ENCODE measurements at regions of chr15 and their contacts with region 1.

Region 1: GRCh38 chr15:75532413-75533147 is 46.5 kb downstream of the PTPN9 start:
- DNase-seq: peak; percentile 58 to 67
- H3K4me3 ChIP-seq: no peak overlapping the region
- H3K4me3 Mint-ChIP-seq: no peak overlapping the region
- H3K27ac Mint-ChIP-seq: no peak overlapping the region
- H3K4me1 ChIP-seq: peaks cover 23% of the 10 kb centered on the region
- H3K4me1 Mint-ChIP-seq: peaks cover 17% of the 10 kb centered on the region
- H3K27me3 ChIP-seq: no peaks in the 10 kb centered on the region
- H3K27me3 Mint-ChIP-seq: no peaks in the 10 kb centered on the region
- CTCF ChIP-seq: peak; percentile 48 to 68

Region 2: DNA sequence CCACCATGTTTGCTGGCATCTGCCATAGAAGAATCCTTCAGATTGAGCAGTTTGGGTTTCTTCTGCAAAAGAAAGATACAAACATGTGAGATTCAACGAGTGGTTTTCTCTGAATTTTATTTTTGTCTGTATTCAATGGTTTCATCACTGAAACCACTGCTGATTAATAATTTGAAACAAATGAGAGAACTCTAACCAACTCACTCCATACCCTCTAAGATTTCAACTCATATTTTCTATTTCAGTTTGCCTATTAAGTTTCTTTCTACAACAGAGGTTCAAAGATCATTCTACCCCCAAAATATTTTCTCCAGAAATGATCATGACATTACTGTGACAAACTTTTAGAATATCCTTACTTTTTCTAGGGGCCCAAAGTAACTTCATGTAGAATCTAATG is 125.5 kb before region 1 on chr15:
- CTCF ChIA-PET with region 1: no interaction called
- POLR2A ChIA-PET with region 1: no interaction called
- intact Hi-C with region 1: no loop called
- DNase-seq: no peak
- H3K4me3 ChIP-seq: no peak overlapping the region
- H3K4me3 Mint-ChIP-seq: no peak overlapping the region
- H3K27ac Mint-ChIP-seq: no peak overlapping the region
- H3K4me1 ChIP-seq: no peaks in the 10 kb centered on the region
- H3K4me1 Mint-ChIP-seq: no peaks in the 10 kb centered on the region
- H3K27me3 ChIP-seq: no peaks in the 10 kb centered on the region
- H3K27me3 Mint-ChIP-seq: no peaks in the 10 kb centered on the region
- CTCF ChIP-seq: no peak

Region 3: DNA sequence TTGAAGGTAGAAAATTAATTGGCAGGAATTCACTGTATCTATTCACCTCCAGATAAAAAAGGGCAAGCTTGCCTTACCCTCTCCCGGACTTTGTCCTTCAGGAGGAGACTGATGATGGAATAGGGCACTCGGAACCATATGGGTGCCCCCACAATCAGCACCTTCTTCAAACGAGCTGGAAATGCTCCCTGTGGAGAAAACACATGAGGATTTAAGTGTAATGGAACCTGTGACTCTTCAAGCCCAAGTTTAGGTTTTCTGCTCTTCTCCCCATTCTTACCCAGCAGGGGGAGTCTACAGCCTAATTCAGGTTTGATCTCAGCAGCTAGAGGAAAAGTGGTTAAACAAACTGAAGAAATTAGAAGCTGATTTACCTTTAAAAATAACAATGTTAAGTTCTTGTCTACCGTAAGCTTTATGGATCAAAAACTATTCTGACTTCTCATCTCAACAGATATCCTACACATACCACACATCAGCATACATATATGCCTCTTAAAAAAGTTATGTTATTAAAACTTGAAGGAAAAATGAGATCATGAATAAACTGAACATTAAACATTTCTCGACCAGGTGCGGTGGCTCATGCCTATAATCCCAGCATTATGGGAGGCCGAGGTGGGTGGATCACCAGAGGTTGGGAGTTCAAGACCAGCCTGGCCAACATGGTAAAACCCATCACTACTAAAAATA is 23.6 kb before region 1 on chr15:
- CTCF ChIA-PET with region 1: interaction called, 15 read pairs
- POLR2A ChIA-PET with region 1: no interaction called
- intact Hi-C with region 1: no loop called
- DNase-seq: peak in 1 of 2 experiments; percentile 50
- H3K4me3 ChIP-seq: no peak overlapping the region
- H3K4me3 Mint-ChIP-seq: no peak overlapping the region
- H3K27ac Mint-ChIP-seq: no peak overlapping the region
- H3K4me1 ChIP-seq: no peaks in the 10 kb centered on the region
- H3K4me1 Mint-ChIP-seq: no peaks in the 10 kb centered on the region
- H3K27me3 ChIP-seq: no peaks in the 10 kb centered on the region
- H3K27me3 Mint-ChIP-seq: no peaks in the 10 kb centered on the region
- CTCF ChIP-seq: peak; percentile 51 to 73

Region 4: GRCh38 chr15:75659928-75660645 is 127.5 kb after region 1 on chr15:
- CTCF ChIA-PET with region 1: no interaction called
- POLR2A ChIA-PET with region 1: no interaction called
- intact Hi-C with region 1: no loop called
- DNase-seq: no peak
- H3K4me3 ChIP-seq: no peak overlapping the region
- H3K4me3 Mint-ChIP-seq: no peak overlapping the region
- H3K27ac Mint-ChIP-seq: no peak overlapping the region
- H3K4me1 ChIP-seq: peaks cover 54% of the 10 kb centered on the region
- H3K4me1 Mint-ChIP-seq: peaks cover 52% of the 10 kb centered on the region
- H3K27me3 ChIP-seq: no peaks in the 10 kb centered on the region
- H3K27me3 Mint-ChIP-seq: no peaks in the 10 kb centered on the region
- CTCF ChIP-seq: no peak

Region 5: GRCh38 chr15:76084256-76084655 is 551.7 kb after region 1 on chr15:
- CTCF ChIA-PET with region 1: no interaction called
- POLR2A ChIA-PET with region 1: no interaction called
- intact Hi-C with region 1: no loop called
- DNase-seq: no peak
- H3K4me3 ChIP-seq: no peak overlapping the region
- H3K4me3 Mint-ChIP-seq: no peak overlapping the region
- H3K27ac Mint-ChIP-seq: no peak overlapping the region
- H3K4me1 ChIP-seq: no peaks in the 10 kb centered on the region
- H3K4me1 Mint-ChIP-seq: no peaks in the 10 kb centered on the region
- H3K27me3 ChIP-seq: no peaks in the 10 kb centered on the region
- H3K27me3 Mint-ChIP-seq: peaks cover 3% of the 10 kb centered on the region
- CTCF ChIP-seq: no peak

Region 6: GRCh38 chr15:76150971-76151598 is 618.5 kb after region 1 on chr15:
- CTCF ChIA-PET with region 1: no interaction called
- POLR2A ChIA-PET with region 1: no interaction called
- intact Hi-C with region 1: no loop called
- DNase-seq: peak; percentile 69 to 81
- H3K4me3 ChIP-seq: no peak overlapping the region
- H3K4me3 Mint-ChIP-seq: no peak overlapping the region
- H3K27ac Mint-ChIP-seq: peak overlapping the region; percentile 15
- H3K4me1 ChIP-seq: no peaks in the 10 kb centered on the region
- H3K4me1 Mint-ChIP-seq: peaks cover 13% of the 10 kb centered on the region
- H3K27me3 ChIP-seq: no peaks in the 10 kb centered on the region
- H3K27me3 Mint-ChIP-seq: no peaks in the 10 kb centered on the region
- CTCF ChIP-seq: peak; percentile 66 to 86